CD8-positive, alpha-beta T cell (primary cell): ENCODE measurements at regions of chr4 and their contacts with region 1.

Region 1: DNA sequence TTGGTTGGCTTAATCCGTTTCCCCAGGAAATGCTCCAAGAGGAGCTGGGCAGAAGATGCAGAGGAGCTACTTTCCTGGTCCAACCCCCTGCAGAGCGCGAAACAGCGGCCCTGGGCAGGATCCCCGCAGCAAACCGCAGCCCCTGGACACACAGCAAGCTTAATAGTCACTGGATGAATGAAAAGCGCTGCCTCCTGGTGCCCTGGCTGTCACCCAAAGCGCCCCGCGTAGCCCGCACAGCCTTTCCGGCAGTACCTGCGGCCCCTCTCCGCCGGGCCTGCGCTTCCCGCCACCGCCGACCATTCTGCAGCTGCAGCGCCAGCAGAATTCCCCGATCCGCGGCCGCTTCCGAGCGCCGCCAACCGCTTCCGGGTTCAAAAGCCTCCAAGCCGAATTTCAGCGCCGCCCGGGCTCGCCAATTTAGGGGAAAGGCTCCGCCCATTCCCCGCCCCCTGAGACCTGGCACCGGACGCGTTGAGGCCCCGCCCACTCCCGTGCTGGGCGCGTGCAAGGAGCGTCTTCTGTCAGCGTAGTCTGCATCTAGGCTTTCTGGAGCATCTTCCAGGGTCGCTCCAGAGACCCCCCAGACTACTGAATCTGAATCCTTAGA is at the start of gene HPF1:
- DNase-seq: peak; percentile 82 to 97 (median 95)
- ATAC-seq: peak; percentile 98
- H3K4me3 ChIP-seq: peak within 1 kb of the TSS; percentile 62 to 97
- H3K4me3 Mint-ChIP-seq: peak within 1 kb of the TSS; percentile 82
- H3K27ac ChIP-seq: peak within 1 kb of the TSS; percentile 31 to 63
- H3K27ac Mint-ChIP-seq: peak within 1 kb of the TSS; percentile 64
- H3K4me1 ChIP-seq: peaks cover 14% of the 10 kb centered on the region
- H3K4me1 Mint-ChIP-seq: peaks cover 34% of the 10 kb centered on the region
- H3K27me3 ChIP-seq: no peaks in the 10 kb centered on the region
- H3K27me3 Mint-ChIP-seq: no peaks in the 10 kb centered on the region
- CTCF ChIP-seq: no peak
- total RNA-seq, gene HPF1: 3.1 to 4.2 TPM

Region 2: DNA sequence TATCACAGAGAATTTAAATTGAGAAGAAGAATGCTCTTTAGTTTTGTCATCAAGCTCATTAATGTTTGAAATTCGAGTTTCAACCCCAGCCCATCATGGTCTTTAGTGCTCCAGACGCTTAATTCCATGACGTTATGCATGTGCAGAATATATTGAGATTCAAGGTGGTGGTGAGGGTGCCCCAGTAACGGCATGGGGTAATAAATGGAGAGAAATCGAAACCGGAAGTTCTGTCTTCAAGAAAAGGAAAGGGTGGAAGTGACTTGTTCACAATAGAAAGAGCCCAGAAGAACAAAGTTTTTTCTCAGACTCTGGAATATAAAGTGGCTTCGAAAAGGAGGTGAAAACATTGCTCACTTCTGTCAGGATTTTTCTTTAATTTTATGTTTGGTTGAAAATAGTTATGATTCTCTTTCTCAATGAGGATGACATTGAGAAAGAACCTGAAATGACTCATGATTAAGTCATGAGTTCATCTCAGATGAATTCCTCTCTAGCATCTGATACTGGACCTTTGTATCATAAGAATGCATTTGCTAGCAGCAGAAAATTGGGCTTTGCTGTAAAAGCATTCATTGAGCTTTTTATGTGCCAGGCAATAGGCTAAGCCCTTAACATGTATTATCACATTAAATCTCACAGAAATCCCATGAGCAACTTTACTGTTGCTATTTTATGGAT is 1276.6 kb before region 1 on chr4:
- CTCF ChIA-PET with region 1: no interaction called
- POLR2A ChIA-PET with region 1: no interaction called
- intact Hi-C with region 1: loop called in 1 of 2 experiments (anchors 10 kb)
- DNase-seq: peak in 8 of 9 experiments; percentile 16 to 89 (median 56)
- ATAC-seq: peak; percentile 67
- H3K4me3 ChIP-seq: peak overlapping the region; percentile 56 to 93
- H3K4me3 Mint-ChIP-seq: peak overlapping the region; percentile 99
- H3K27ac ChIP-seq: peak overlapping the region; percentile 82 to 96
- H3K27ac Mint-ChIP-seq: peak overlapping the region; percentile 97
- H3K4me1 ChIP-seq: peaks cover 42% of the 10 kb centered on the region
- H3K4me1 Mint-ChIP-seq: peaks cover 66% of the 10 kb centered on the region
- H3K27me3 ChIP-seq: no peaks in the 10 kb centered on the region
- H3K27me3 Mint-ChIP-seq: no peaks in the 10 kb centered on the region
- CTCF ChIP-seq: no peak

Region 3: DNA sequence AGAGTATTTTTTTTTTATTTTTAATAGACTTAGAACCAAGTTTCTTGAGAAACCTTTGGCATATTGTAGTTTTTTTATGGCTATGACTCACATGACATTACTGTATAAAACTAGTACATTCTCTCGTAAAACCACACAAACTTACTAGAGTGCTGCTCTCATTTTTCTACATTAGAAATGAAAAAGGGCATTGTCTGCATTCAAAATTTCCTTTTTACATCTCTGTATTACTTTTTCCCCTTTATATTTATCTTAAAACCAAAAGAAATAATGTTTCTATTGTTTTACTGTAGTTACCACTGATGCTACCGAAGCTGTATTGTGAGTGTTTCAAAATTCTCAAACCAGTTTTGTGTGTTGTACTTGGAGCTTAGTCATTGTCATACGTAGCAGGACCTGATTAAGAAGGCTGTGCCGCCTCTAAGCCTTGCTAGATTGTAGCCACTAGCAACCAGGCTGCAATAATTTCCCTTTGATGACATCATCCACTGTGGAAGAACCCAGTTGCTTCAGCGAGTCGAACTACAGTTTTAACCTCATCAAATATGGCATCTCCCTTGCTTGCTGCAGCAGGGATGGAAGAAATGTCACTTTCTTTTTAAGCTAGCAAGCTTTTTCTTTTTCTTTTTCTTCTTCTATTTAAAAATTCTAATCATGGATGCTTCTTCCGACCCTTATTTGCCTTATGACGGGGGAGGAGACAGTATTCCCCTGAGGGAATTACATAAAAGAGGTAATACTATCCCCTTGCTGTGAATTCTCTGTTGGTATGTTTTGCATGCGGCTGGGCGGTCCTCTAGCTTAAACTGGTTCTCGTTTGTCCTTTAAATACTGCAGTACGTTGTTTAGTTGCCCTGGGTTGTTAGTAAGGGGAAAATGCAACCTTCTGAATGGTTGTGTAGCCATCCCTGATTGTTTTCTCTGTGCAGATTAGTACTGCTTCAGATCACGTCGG is 97.7 kb before region 1 on chr4:
- CTCF ChIA-PET with region 1: no interaction called
- POLR2A ChIA-PET with region 1: no interaction called
- intact Hi-C with region 1: loop called in 1 of 2 experiments (anchors 5 kb)
- DNase-seq: peak; percentile 29 to 91 (median 62)
- ATAC-seq: peak; percentile 96
- H3K4me3 ChIP-seq: peak overlapping the region; percentile 13 to 16
- H3K4me3 Mint-ChIP-seq: peak overlapping the region; percentile 80
- H3K27ac ChIP-seq: peak overlapping the region; percentile 13 to 45
- H3K27ac Mint-ChIP-seq: peak overlapping the region; percentile 88
- H3K4me1 ChIP-seq: peaks cover 23% of the 10 kb centered on the region
- H3K4me1 Mint-ChIP-seq: peaks cover 45% of the 10 kb centered on the region
- H3K27me3 ChIP-seq: no peaks in the 10 kb centered on the region
- H3K27me3 Mint-ChIP-seq: no peaks in the 10 kb centered on the region
- CTCF ChIP-seq: no peak

Region 4: DNA sequence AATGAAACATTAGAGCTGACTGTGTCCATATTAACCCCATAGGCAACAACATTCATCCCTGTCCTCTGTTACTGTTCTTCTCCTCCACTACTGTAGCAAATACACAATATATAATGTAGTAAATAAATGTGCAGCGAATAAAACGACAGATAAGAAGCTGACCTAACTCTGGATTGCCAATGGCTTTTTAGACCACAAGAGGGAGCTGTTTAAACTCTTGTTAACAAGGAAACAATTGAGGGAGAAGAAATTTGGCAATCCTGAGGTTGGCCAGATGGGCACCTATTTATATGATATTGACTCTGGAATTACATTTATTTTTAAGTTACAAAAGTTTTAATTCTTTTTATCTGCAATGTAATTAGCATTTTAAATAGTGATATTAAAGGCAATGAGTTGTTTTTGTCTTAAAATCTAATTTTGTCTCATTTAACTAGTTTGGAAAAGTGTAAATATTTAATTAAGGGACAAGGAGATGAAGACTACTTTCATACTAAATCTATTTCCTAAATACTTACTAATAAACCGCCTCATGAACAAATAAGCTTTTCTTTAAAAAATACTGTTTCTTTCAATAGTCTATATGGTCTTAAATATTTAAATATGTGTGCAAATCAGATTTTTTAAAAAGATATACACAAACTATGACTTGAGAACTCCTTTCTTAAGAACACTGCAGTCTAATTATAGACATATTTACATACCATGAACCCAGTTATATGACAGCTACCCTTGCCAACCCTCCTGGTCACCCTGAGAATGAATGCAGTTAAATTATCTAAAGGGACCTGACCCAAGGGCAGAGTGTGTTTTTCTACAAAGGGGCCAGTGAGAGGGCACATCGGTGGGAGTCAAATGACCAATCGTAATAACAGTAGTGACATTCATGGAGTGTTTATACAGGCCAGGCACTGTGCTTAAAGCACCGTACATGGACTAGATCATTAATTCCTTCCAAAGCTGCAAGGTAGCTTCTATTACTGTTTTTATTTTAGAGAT is 52.9 kb after region 1 on chr4:
- CTCF ChIA-PET with region 1: no interaction called
- POLR2A ChIA-PET with region 1: no interaction called
- intact Hi-C with region 1: no loop called
- DNase-seq: peak in 3 of 9 experiments; percentile 18 to 68 (median 61)
- ATAC-seq: no peak
- H3K4me3 ChIP-seq: no peak overlapping the region
- H3K4me3 Mint-ChIP-seq: no peak overlapping the region
- H3K27ac ChIP-seq: no peak overlapping the region
- H3K27ac Mint-ChIP-seq: no peak overlapping the region
- H3K4me1 ChIP-seq: no peaks in the 10 kb centered on the region
- H3K4me1 Mint-ChIP-seq: no peaks in the 10 kb centered on the region
- H3K27me3 ChIP-seq: no peaks in the 10 kb centered on the region
- H3K27me3 Mint-ChIP-seq: peaks cover 6% of the 10 kb centered on the region
- CTCF ChIP-seq: peak; percentile 79